PC-9 (cell line): ENCODE measurements at regions of chr19 and their contacts with region 1.

Region 1: GRCh38 chr19:52248241-52248640 is 21.1 kb upstream of the ZNF766 start:
- DNase-seq: peak; percentile 25 to 40
- H3K4me3 ChIP-seq: no peak overlapping the region
- H3K27ac ChIP-seq: no peak overlapping the region
- H3K4me1 ChIP-seq: no peaks in the 10 kb centered on the region
- H3K27me3 ChIP-seq: peaks cover 29% of the 10 kb centered on the region; the same call in 1 of the 2 replicates
- CTCF ChIP-seq: peak; percentile 66

Region 2: DNA sequence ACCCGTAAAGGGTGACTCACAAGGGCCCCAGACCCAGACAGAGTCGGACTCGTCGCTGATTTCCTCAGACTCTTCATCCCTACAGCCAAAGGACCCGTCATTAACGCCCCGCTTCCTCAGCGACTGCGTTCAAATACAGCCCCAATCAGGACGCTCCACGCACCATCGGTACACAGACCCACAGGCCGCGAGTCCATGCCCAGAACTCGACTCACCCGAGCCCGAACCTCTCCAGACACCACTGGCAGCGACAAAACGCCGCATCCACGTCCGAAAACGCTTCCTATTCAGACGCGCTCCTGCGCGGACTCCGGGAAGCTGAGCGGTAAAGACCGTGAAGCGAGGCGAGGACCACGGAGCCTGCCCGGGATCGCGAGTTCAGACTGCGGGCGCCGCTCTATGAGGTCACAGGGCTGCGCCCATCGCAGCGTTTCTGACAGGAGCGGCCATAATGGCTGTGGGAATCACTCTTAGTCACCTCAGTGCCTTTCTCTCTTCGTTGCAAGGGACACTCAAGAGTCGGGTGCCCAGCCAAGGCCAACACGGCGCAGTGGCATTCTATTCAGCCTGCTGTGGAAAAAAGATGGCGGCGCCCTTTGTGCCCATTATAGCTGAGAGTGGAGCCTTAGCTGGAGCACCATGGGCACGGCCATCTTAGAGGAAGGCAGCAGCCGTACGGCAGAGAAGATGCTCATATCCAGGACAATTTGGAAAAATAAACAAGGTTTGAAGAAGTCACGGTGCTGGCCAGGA is 220.0 kb before region 1 on chr19 and contains the start of gene ZNF614:
- CTCF ChIA-PET with region 1: no interaction called
- POLR2A ChIA-PET with region 1: no interaction called
- intact Hi-C with region 1: no loop called
- DNase-seq: peak; percentile 75 to 85
- H3K4me3 ChIP-seq: peak within 1 kb of the TSS; percentile 79
- H3K27ac ChIP-seq: peak within 1 kb of the TSS; percentile 69
- H3K4me1 ChIP-seq: peaks cover 7% of the 10 kb centered on the region; the same call in 1 of the 2 replicates
- H3K27me3 ChIP-seq: no peaks in the 10 kb centered on the region
- CTCF ChIP-seq: no peak
- total RNA-seq, gene ZNF614: 8.6 and 9.9 TPM in 2 replicates

Region 3: GRCh38 chr19:52473655-52474350 is 225.6 kb after region 1 on chr19:
- CTCF ChIA-PET with region 1: no interaction called
- POLR2A ChIA-PET with region 1: no interaction called
- intact Hi-C with region 1: no loop called
- DNase-seq: no peak
- H3K4me3 ChIP-seq: no peak overlapping the region
- H3K27ac ChIP-seq: no peak overlapping the region
- H3K4me1 ChIP-seq: no peaks in the 10 kb centered on the region
- H3K27me3 ChIP-seq: no peaks in the 10 kb centered on the region
- CTCF ChIP-seq: no peak

Region 4: GRCh38 chr19:52748336-52748950 is 500.2 kb after region 1 on chr19:
- CTCF ChIA-PET with region 1: no interaction called
- POLR2A ChIA-PET with region 1: no interaction called
- intact Hi-C with region 1: loop called (anchors 5 kb)
- DNase-seq: no peak
- H3K4me3 ChIP-seq: no peak overlapping the region
- H3K27ac ChIP-seq: no peak overlapping the region
- H3K4me1 ChIP-seq: no peaks in the 10 kb centered on the region
- H3K27me3 ChIP-seq: no peaks in the 10 kb centered on the region
- CTCF ChIP-seq: peak; percentile 66